GM12878 (cell line): ENCODE measurements at regions of chr17 and their contacts with region 1.

Region 1: GRCh38 chr17:60599620-60600489 is at the start of gene PPM1D:
- DNase-seq: peak; percentile 92
- ATAC-seq: peak; percentile 91
- H3K4me3 ChIP-seq: peak within 1 kb of the TSS; percentile 89
- H3K27ac ChIP-seq: peak within 1 kb of the TSS; percentile 87
- H3K4me1 ChIP-seq: no peaks in the 10 kb centered on the region
- H3K27me3 ChIP-seq: no peaks in the 10 kb centered on the region
- CTCF ChIP-seq: no peak
- EP300 ChIP-seq: no peak
- POLR2A ChIP-seq: peak; percentile 94
- RAD21 ChIP-seq: no peak
- polyA plus RNA-seq, gene PPM1D: 1.9 to 3.5 TPM

Region 2: GRCh38 chr17:60481604-60482003 is 118.3 kb before region 1 on chr17:
- CTCF ChIA-PET with region 1: no interaction called
- POLR2A ChIA-PET with region 1: no interaction called
- RAD21 ChIA-PET with region 1: no interaction called
- SMC1A ChIA-PET with region 1: no interaction called
- in situ Hi-C with region 1: no loop called
- intact Hi-C with region 1: no loop called
- DNase-seq: no peak
- ATAC-seq: no peak
- H3K4me3 ChIP-seq: no peak overlapping the region
- H3K27ac ChIP-seq: no peak overlapping the region
- H3K4me1 ChIP-seq: no peaks in the 10 kb centered on the region
- H3K27me3 ChIP-seq: no peaks in the 10 kb centered on the region
- CTCF ChIP-seq: no peak
- EP300 ChIP-seq: no peak
- POLR2A ChIP-seq: no peak
- RAD21 ChIP-seq: no peak

Region 3: GRCh38 chr17:60496051-60496450 is 103.8 kb before region 1 on chr17:
- CTCF ChIA-PET with region 1: no interaction called
- POLR2A ChIA-PET with region 1: no interaction called
- RAD21 ChIA-PET with region 1: no interaction called
- SMC1A ChIA-PET with region 1: no interaction called
- in situ Hi-C with region 1: no loop called
- intact Hi-C with region 1: no loop called
- DNase-seq: no peak
- ATAC-seq: no peak
- H3K4me3 ChIP-seq: no peak overlapping the region
- H3K27ac ChIP-seq: no peak overlapping the region
- H3K4me1 ChIP-seq: no peaks in the 10 kb centered on the region
- H3K27me3 ChIP-seq: no peaks in the 10 kb centered on the region
- CTCF ChIP-seq: no peak
- EP300 ChIP-seq: no peak
- POLR2A ChIP-seq: no peak
- RAD21 ChIP-seq: no peak

Region 4: GRCh38 chr17:60525685-60526514 is 74.0 kb before region 1 on chr17 and contains the start of gene APPBP2:
- CTCF ChIA-PET with region 1: interaction called, 3 read pairs
- POLR2A ChIA-PET with region 1: interaction called, 4 read pairs
- RAD21 ChIA-PET with region 1: interaction called, 3 read pairs
- SMC1A ChIA-PET with region 1: interaction called, 10 read pairs
- in situ Hi-C with region 1: no loop called
- intact Hi-C with region 1: no loop called
- DNase-seq: peak; percentile 34
- ATAC-seq: peak; percentile 91
- H3K4me3 ChIP-seq: peak within 1 kb of the TSS; percentile 93
- H3K27ac ChIP-seq: peak within 1 kb of the TSS; percentile 93
- H3K4me1 ChIP-seq: no peaks in the 10 kb centered on the region
- H3K27me3 ChIP-seq: no peaks in the 10 kb centered on the region
- CTCF ChIP-seq: no peak
- EP300 ChIP-seq: no peak
- POLR2A ChIP-seq: peak; percentile 80
- RAD21 ChIP-seq: no peak
- polyA plus RNA-seq, gene APPBP2: 4.3 to 5.7 TPM

Region 5: DNA sequence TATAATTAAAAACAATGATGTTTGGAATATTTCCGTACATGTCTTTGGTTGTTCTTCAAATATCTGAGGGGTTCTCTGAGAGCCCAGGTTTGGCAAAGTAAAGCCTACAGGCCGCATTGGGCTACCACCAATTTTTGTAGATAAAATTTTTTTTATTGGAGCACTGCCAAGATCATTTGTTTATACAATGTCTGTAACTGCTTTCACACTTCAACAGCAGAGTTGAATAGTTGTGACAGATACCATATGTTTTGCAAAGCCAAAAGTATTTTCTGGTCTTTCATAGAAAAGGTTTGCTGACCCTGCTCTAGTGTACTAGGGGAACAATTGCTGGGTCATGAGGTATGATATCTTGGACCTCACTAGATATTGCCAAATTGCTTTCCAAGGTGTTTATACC is 10.6 kb after region 1 on chr17:
- CTCF ChIA-PET with region 1: interaction called, 5 read pairs
- POLR2A ChIA-PET with region 1: interaction called, 12 read pairs
- RAD21 ChIA-PET with region 1: no interaction called
- SMC1A ChIA-PET with region 1: interaction called, 10 read pairs
- in situ Hi-C with region 1: no loop called
- intact Hi-C with region 1: no loop called
- DNase-seq: no peak
- ATAC-seq: no peak
- H3K4me3 ChIP-seq: no peak overlapping the region
- H3K27ac ChIP-seq: no peak overlapping the region
- H3K4me1 ChIP-seq: no peaks in the 10 kb centered on the region
- H3K27me3 ChIP-seq: no peaks in the 10 kb centered on the region
- CTCF ChIP-seq: no peak
- EP300 ChIP-seq: no peak
- POLR2A ChIP-seq: no peak
- RAD21 ChIP-seq: no peak

Region 6: GRCh38 chr17:60615840-60616239 is 16.0 kb after region 1 on chr17:
- CTCF ChIA-PET with region 1: interaction called, 5 read pairs
- POLR2A ChIA-PET with region 1: interaction called, 12 read pairs
- RAD21 ChIA-PET with region 1: no interaction called
- SMC1A ChIA-PET with region 1: interaction called, 10 read pairs
- in situ Hi-C with region 1: no loop called
- intact Hi-C with region 1: no loop called
- DNase-seq: no peak
- ATAC-seq: no peak
- H3K4me3 ChIP-seq: no peak overlapping the region
- H3K27ac ChIP-seq: no peak overlapping the region
- H3K4me1 ChIP-seq: no peaks in the 10 kb centered on the region
- H3K27me3 ChIP-seq: no peaks in the 10 kb centered on the region
- CTCF ChIP-seq: no peak
- EP300 ChIP-seq: no peak
- POLR2A ChIP-seq: no peak
- RAD21 ChIP-seq: no peak

Region 7: DNA sequence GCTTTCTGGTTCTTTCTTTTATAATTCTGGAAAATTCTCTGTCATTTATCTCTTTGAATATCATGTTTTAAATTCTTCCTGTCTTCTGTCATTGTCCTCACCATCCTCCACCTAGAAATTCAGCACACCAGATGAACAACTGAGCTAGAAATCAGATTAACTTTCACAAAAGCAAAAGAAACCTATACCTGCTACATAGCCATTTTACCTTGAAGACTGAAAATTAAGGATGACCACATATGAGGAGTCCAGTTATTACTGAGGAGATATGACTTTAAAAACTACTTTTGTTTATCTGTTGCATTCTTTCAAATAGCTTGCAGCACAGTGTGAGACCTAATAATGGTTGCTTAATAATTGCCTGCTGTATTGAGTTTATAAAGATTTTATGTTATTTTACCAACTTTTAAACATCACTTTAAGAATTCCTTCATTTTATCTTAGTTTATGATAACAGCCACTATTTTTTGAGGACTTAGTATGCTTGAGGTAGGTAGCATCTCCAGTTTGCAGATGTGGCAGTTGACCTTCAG is 182.1 kb after region 1 on chr17:
- CTCF ChIA-PET with region 1: no interaction called
- POLR2A ChIA-PET with region 1: no interaction called
- RAD21 ChIA-PET with region 1: no interaction called
- SMC1A ChIA-PET with region 1: no interaction called
- in situ Hi-C with region 1: no loop called
- intact Hi-C with region 1: no loop called
- DNase-seq: no peak
- ATAC-seq: no peak
- H3K4me3 ChIP-seq: no peak overlapping the region
- H3K27ac ChIP-seq: no peak overlapping the region
- H3K4me1 ChIP-seq: no peaks in the 10 kb centered on the region
- H3K27me3 ChIP-seq: no peaks in the 10 kb centered on the region
- CTCF ChIP-seq: no peak
- EP300 ChIP-seq: no peak
- POLR2A ChIP-seq: no peak
- RAD21 ChIP-seq: no peak